ENCODE measurements at regions of chr20 and their contacts with region 1.

Region 1: DNA sequence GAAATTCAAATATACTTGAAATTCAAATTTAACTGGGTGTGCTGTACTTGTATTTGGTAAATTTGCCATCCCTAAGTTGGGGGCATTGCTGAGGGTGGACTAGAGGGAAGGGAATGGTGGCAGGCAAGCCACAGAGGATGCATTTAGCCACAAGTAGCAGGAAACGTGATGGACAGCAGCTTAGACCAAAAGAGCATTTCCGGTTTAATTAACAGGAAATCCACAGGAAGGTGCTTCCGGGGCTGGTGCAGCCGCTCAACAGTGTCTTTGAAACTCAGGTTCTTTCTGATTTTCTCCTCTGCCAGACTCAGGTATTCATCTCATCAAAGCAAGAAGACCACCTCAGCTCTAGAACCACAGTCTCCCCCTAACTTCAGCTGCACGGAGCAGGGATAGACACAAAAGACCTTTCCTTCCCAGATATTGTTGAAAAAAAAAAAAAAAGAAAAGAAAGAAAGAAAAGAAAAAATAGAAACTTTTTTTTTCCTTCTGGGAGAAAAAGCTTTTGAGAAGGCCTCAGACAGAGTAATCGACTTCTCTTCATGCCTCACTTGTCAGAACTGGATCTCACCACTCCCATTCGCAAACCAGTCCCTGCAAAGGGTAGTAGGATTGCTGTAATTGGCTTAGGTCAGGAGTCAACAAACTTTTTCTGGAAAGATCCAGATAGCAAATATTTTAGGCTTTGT is 8.0 kb upstream of the BCAS1 start:
- DNase-seq: peak in 6 of 10 donors; percentile 5 to 39 (median 14)
- ATAC-seq: peak; percentile 70 to 81
- H3K4me3 Mint-ChIP-seq: peak overlapping the region; percentile 52 to 84 (median 71)
- H3K27ac Mint-ChIP-seq: peak overlapping the region; percentile 82 to 95 (median 89)
- H3K4me1 Mint-ChIP-seq: peaks cover 16 to 61% (median 57%) of the 10 kb centered on the region in 4 donors
- H3K27me3 Mint-ChIP-seq: no peaks in the 10 kb centered on the region

Region 2: DNA sequence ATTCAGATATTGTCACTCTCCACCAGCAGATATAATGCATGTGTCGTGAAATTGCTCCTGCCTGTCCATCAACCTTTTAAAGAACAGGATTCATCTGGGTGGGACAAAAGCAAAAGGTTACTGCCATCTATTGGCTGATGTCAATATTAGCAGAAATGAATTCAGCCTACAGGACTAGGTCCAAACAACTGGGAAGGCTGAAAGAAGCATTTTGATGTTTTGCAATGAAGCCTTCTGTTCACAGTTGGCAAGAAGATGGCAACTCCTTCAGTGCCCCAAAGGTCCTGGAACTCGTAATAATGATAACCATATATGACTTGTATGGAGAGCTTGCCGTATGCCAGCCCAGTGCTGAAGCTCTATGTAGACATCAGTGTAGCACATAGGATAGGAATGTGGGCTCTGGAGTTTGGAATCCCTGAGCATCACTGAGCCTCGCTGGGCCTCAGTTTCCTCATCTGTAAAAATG is 15.6 kb before region 1 on chr20:
- POLR2A ChIA-PET with region 1: interaction called, 10 read pairs
- DNase-seq: peak in 3 of 10 donors; percentile 28 to 38 (median 34)
- ATAC-seq: no peak
- H3K4me3 Mint-ChIP-seq: peak overlapping the region in 3 of 10 donors; percentile 4 to 71 (median 50)
- H3K27ac Mint-ChIP-seq: peak overlapping the region in 9 of 10 donors; percentile 25 to 93 (median 83)
- H3K4me1 Mint-ChIP-seq: peaks cover 14 to 34% (median 27%) of the 10 kb centered on the region in 4 donors
- H3K27me3 Mint-ChIP-seq: no peaks in the 10 kb centered on the region

Measured in naive thymus-derived CD8-positive, alpha-beta T cell (primary cell).